Activated CD4-positive, alpha-beta T cell treated with anti-CD3 and anti-CD28 coated beads, Interleukin-2, amount 10 ng/mL, durations not matched to agents 7 days and 5 days (primary cell): ENCODE measurements at regions of chr3 and their contacts with region 1.

Region 1: DNA sequence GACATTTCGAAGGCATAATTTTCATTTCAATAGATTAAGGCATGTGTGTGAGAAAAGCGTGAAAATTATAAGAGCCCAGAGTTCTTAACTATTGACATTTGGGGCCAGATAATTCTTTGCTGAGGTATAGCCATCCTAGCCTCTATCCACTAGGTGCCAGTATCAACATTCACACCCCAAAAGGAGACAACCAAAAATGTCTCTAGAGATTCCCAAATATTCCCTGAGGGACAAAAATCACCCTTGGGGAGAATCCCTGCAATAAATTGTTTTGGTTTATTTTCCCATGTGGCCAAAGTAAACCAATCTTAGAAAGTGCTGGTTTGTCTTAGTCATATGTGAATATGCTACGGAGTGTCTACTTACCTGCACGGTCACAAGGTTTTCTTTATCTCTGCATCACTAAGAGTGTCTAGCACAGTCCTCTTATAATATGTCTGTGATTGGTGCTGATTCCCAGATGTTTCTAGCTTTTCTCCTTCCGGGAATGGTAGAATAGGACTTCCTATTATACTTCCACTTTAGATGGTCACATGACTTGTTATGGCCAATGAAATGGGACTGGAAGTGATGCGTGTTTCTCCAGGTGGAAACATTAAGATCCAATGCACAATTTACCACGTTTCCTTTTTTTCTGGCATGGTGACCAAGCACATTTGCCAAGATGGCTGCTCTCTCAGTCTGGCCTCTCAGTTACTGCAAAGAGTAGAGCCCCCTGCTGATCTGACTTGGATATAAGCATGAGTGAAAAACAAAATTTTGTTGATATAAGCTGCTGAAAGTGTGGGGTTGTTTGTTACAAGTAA is 8.0 kb upstream of the KBTBD8 start:
- DNase-seq: no peak
- H3K4me3 Mint-ChIP-seq: no peak overlapping the region
- H3K27ac Mint-ChIP-seq: no peak overlapping the region
- H3K4me1 Mint-ChIP-seq: no peaks in the 10 kb centered on the region
- H3K27me3 Mint-ChIP-seq: peaks cover 15% of the 10 kb centered on the region

Region 2: DNA sequence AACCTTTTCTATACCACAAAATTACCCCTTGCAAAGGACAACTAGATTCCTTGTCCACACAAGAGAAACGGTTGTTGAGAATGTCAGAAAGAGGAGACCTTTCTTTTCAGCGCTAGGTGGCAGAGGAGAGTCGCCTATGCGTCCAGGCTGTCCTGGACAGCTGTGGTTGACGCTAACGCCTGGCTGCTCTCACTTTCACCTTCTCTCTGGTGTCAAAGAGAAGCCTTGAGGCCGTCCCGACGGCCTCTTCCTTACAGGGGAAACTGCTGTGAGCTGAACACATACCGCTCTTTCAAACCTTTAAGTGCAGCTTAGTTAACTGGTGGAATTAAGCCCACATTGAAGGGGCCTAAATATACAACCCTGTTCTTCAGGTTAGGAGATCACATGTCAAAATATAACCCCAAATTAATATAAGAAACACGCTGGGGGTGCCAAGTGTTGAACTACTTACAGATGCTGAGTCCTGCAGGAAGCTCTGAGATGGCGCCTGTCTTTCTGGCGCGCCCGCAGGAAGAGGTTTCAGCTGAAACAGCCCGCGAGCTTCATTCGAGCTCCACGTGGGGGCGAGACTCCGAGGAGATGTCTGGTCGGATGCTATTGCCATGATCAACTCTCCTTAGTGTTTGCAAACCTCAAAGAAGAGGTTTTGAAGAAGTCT is 18.0 kb before region 1 on chr3:
- CTCF ChIA-PET with region 1: interaction called, 14 read pairs
- POLR2A ChIA-PET with region 1: no interaction called
- DNase-seq: peak; percentile 67
- H3K4me3 Mint-ChIP-seq: peak overlapping the region; percentile 70
- H3K27ac Mint-ChIP-seq: peak overlapping the region; percentile 77
- H3K4me1 Mint-ChIP-seq: peaks cover 16% of the 10 kb centered on the region
- H3K27me3 Mint-ChIP-seq: peaks cover 4% of the 10 kb centered on the region

Region 3: GRCh38 chr3:67301556-67301955 is 311.5 kb after region 1 on chr3:
- CTCF ChIA-PET with region 1: no interaction called
- POLR2A ChIA-PET with region 1: no interaction called
- DNase-seq: no peak
- H3K4me3 Mint-ChIP-seq: no peak overlapping the region
- H3K27ac Mint-ChIP-seq: no peak overlapping the region
- H3K4me1 Mint-ChIP-seq: no peaks in the 10 kb centered on the region
- H3K27me3 Mint-ChIP-seq: peaks cover 2% of the 10 kb centered on the region

Region 4: DNA sequence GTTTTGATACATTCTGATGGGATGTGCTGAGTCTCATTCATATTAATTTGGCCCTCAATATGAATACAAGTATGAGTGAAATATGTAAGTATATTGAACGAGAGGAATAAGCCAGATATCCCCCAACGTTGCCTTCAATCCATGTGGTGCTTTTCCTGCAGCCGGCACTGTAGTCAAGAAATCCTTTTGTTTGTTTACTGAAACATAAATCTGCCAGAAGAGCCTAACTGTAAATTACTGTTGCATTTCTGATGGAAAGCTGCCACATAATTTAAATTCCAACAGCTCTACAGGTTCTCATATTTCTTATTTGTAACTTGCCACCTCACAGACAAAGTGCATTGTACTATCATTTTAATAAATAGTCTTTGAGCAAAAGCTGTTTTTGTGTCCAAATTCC is 322.1 kb after region 1 on chr3:
- CTCF ChIA-PET with region 1: no interaction called
- POLR2A ChIA-PET with region 1: no interaction called
- DNase-seq: no peak
- H3K4me3 Mint-ChIP-seq: no peak overlapping the region
- H3K27ac Mint-ChIP-seq: no peak overlapping the region
- H3K4me1 Mint-ChIP-seq: no peaks in the 10 kb centered on the region
- H3K27me3 Mint-ChIP-seq: no peaks in the 10 kb centered on the region